ENCODE measurements at regions of chr6 and their contacts with region 1.

Region 1: DNA sequence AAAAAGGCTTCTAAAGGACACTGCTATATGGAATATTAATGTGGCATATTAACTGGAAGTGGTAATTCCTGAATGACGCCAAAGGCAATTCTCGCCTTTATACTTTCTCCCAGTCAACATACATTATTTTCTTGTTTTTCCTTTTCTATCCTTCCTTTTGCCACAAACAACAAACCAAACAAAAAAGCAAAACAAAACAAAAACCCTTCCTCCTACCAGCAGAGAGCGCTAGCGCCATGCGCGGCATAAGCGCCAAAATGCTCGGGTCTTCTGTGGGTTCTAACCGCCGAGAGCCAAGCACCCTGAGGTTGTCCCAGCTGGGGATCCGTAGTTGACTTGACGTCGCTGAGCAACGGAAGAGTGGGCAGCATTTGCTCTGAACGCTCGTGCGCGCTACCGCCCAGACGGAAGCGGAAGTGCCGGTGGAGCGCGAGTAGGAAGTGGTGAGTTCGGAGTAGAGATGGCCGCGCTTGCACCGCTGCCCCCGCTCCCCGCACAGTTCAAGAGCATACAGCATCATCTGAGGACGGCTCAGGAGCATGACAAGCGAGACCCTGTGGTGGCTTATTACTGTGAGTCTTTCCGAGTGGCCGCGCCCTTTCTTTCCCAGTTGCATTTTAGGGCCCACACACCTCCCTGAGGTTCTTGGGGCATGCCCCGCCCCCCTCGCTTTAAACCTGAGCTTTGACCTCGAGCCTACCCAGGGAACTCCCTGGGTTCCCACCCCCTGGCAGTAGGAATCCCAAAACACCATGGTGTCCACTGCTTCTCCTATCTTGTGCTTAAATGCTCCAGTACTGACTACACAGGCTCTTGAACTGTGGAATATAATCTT is at the starts of genes NMBR and VTA1:
- DNase-seq: peak; percentile 97 to 99 (median 99)
- H3K4me3 ChIP-seq: peak within 1 kb of the TSS; percentile 64 to 74 (median 66)
- H3K27ac ChIP-seq: peak within 1 kb of the TSS in 2 of 5 donors; percentile 36 to 69
- H3K4me1 ChIP-seq: peaks cover 5 to 26% of the 10 kb centered on the region in 2 donors
- H3K27me3 ChIP-seq: no peaks in the 10 kb centered on the region
- CTCF ChIP-seq: peak; percentile 76 to 98 (median 92)
- POLR2A ChIP-seq: peak in 1 of 2 donors; percentile 41
- total RNA-seq, gene NMBR: 0.11 to 0.15 TPM in 2 of 9 donors, not detected in the others
- total RNA-seq, gene VTA1: 27.4 to 69.0 (median 35.6) TPM

Region 2: GRCh38 chr6:142207265-142207877 is 60.3 kb after region 1 on chr6:
- intact Hi-C with region 1: loop called (anchors 5 to 10 kb)
- DNase-seq: peak; percentile 48 to 80 (median 63)
- H3K4me3 ChIP-seq: no peak overlapping the region
- H3K27ac ChIP-seq: no peak overlapping the region
- H3K4me1 ChIP-seq: no peaks in the 10 kb centered on the region
- H3K27me3 ChIP-seq: no peaks in the 10 kb centered on the region
- CTCF ChIP-seq: peak; percentile 76 to 91 (median 82)
- POLR2A ChIP-seq: no peak

Region 3: GRCh38 chr6:142387997-142388815 is 241.2 kb after region 1 on chr6:
- intact Hi-C with region 1: loop called in 1 of 2 experiments (anchors 10 kb)
- DNase-seq: no peak
- H3K4me3 ChIP-seq: no peak overlapping the region
- H3K27ac ChIP-seq: no peak overlapping the region
- H3K4me1 ChIP-seq: no peaks in the 10 kb centered on the region
- H3K27me3 ChIP-seq: no peaks in the 10 kb centered on the region
- CTCF ChIP-seq: peak; percentile 35 to 60 (median 50)
- POLR2A ChIP-seq: no peak

Measured in adrenal gland (tissue), 19 donors.